Prostate gland (tissue), 2 donors: ENCODE measurements at regions of chr2 and their contacts with region 1.

Region 1: DNA sequence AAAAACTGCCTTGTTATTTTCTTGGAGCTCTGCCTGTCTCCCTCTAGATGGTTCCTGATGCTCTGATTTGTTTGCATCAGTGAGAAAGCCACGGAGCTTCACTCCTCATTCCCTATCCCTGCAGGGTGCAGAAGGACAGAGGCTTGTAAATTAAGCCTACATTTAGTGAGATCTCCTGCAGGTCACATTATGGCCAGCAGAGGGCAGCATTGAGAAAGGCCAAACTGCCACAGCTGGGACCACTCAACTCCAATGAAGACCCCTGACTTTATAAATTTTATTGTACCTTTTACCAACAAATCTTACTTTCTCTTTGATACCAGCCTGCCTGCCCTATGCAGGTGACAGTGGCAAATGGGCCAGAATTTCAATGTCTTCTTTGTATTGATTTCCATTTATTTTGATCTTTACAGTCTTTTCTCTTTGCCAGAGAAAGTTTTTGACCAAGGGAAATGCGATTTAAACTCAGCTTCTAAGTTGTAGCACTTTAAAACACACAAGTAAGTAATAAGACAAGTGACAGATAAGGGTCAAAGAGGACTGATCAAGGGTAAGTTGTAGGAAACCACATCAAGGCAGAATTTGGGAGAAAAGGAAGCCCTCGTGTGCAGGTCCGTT is 1029.1 kb upstream of the KLHL29 start:
- DNase-seq: peak; percentile 55
- H3K4me3 ChIP-seq: no peak overlapping the region
- H3K27ac ChIP-seq: no peak overlapping the region
- H3K4me1 ChIP-seq: no peaks in the 10 kb centered on the region
- H3K27me3 ChIP-seq: no peaks in the 10 kb centered on the region
- CTCF ChIP-seq: peak; percentile 69 to 86 (median 74)
- POLR2A ChIP-seq: no peak

Region 2: GRCh38 chr2:22221006-22221405 is 134.9 kb before region 1 on chr2:
- intact Hi-C with region 1: no loop called
- DNase-seq: no peak
- H3K4me3 ChIP-seq: no peak overlapping the region
- H3K27ac ChIP-seq: no peak overlapping the region
- H3K4me1 ChIP-seq: no peaks in the 10 kb centered on the region
- H3K27me3 ChIP-seq: no peaks in the 10 kb centered on the region
- CTCF ChIP-seq: no peak
- POLR2A ChIP-seq: no peak

Region 3: DNA sequence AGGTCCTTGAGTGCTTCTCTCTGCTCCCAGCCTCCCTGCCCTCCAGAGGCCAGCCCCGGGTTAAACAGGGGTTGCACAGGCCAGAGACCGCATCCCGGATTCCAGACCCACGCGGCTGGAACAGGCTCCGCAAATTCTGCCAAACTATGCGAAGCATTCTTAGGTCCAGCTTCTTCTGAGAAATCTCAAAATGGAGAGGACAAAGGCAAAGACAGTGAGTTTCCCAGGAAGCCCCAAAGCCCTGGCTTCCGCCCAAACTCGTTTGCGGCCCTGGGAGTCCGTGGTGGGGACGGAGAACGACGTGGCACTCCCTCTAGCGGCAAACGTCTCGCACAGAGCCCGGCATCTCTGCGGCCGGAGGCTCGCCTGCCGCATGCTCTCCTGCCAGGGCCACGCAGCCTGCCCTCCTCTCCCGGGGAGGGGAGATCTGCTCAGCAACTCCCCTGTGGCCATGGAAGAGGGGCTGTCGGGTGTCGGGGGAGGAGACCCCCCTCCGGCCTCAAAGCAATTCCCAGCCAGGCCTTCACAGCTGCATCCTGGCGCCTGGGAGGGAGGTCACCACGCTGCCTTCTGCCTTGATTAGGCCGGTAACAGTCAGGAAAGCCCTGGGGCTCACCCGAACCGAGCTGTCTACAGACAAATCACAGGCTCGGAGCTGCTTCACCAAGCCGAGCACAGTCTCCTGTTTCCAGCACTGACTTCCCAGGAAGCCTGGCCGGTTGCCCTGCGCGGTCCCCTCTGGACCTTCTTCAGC is 995.6 kb after region 1 on chr2:
- intact Hi-C with region 1: loop called (anchors 10 kb)
- DNase-seq: peak; percentile 68
- H3K4me3 ChIP-seq: no peak overlapping the region
- H3K27ac ChIP-seq: peak overlapping the region in 1 of 2 donors; percentile 33
- H3K4me1 ChIP-seq: no peaks in the 10 kb centered on the region
- H3K27me3 ChIP-seq: peaks cover 2% of the 10 kb centered on the region
- CTCF ChIP-seq: peak; percentile 67 to 87 (median 72)
- POLR2A ChIP-seq: no peak